Activated naive CD8-positive, alpha-beta T cell treated with anti-CD3 and anti-CD28 coated beads, Interleukin-2, amount 10 ng/mL, durations not matched to agents 7 days and 5 days (primary cell): ENCODE measurements at regions of chr3 and their contacts with region 1.

Region 1: GRCh38 chr3:170357176-170357919 is at the start of gene SKIL:
- DNase-seq: peak; percentile 93
- ATAC-seq: peak; percentile 80
- H3K4me3 Mint-ChIP-seq: peak within 1 kb of the TSS; percentile 93
- H3K27ac Mint-ChIP-seq: peak within 1 kb of the TSS; percentile 95
- H3K4me1 Mint-ChIP-seq: peaks cover 25% of the 10 kb centered on the region
- H3K27me3 Mint-ChIP-seq: peaks cover 8% of the 10 kb centered on the region
- total RNA-seq, gene SKIL: 27.9 to 32.6 TPM

Region 2: GRCh38 chr3:169804681-169805080 is 552.7 kb before region 1 on chr3:
- POLR2A ChIA-PET with region 1: no interaction called
- DNase-seq: no peak
- ATAC-seq: no peak
- H3K4me3 Mint-ChIP-seq: no peak overlapping the region
- H3K27ac Mint-ChIP-seq: no peak overlapping the region
- H3K4me1 Mint-ChIP-seq: peaks cover 10% of the 10 kb centered on the region
- H3K27me3 Mint-ChIP-seq: no peaks in the 10 kb centered on the region

Region 3: DNA sequence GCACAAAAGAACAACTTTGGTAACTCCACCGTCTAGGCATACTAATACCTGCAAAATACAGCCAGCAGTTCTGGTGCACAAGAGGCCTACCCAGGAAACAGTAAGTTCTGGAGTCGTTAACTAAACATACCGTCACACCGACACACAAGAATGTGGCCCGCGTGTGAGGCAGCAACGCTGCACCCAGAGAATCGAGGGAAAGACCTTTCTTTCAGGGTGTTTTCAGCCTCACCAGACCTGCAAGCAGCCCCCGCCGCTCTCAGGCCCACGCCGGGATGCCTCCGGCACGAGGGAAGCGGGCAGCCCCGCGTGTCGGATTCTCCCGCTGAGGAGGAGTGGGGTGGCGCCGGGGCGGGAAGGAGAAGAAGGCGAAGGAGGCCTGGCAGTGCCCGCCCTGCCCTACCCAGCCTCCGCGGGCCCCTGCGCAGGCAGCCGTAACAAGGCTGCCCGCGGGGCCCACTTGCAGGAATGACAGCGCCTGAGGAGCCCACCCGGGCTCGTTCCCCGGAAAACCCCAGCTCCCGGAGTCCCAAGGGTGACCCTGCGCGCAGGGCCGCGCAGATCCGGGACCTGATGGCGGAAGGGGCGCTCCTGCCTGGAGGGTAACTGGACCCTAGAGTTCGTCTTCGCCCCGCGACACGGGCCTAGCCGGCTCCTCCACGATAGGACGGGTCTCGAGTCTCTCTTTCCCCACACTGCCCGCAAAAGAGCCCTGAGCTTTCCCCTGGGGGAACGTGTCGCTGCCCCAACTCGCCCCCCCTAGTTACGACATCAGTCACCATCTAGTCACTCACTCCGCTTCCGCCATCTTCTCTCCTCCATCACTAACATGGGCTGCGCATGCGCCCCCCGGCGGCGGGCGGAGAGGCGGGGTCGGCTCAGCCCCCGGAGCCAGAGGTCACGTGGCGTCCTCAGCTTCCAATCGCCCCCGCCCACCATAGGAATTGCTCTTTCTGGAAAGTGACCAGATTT is 176.2 kb before region 1 on chr3 and contains the start of gene PHC3:
- POLR2A ChIA-PET with region 1: interaction called, 12 read pairs
- DNase-seq: peak; percentile 94
- ATAC-seq: peak; percentile 76
- H3K4me3 Mint-ChIP-seq: peak within 1 kb of the TSS; percentile 95
- H3K27ac Mint-ChIP-seq: peak within 1 kb of the TSS; percentile 99
- H3K4me1 Mint-ChIP-seq: peaks cover 22% of the 10 kb centered on the region
- H3K27me3 Mint-ChIP-seq: no peaks in the 10 kb centered on the region
- total RNA-seq, gene PHC3: 94.9 to 105 TPM

Region 4: DNA sequence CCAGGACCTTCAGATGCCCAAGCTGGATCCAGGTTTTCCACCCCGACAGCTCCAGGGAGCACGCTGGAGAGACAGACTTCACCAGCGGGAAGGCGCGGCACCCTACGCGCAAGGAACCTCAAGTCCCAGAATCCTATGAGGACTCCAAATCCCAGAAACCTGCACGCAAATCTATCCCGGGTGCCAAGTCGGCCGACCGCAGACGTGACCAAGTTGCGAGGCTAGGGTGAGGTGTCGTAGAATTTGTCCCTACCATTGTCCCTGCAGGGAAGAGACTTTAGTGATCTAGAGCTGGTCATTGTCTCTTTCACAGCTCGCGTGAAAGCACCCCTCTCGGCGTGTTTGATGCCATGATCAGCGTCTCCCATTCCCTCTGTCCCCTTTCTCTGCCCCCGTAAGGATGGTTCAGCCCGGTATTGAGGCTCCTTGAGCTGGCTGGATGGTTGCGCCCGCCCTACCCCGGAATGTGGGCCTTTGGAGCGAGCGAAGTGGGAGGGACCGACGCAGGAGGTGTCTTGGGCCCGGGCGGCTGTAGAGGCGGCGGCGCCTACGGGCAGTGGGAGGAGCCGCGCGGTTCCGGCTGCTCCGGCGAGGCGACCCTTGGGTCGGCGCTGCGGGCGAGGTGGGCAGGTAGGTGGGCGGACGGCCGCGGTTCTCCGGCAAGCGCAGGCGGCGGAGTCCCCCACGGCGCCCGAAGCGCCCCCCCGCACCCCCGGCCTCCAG is 135.3 kb before region 1 on chr3 and contains the start of gene PRKCI:
- POLR2A ChIA-PET with region 1: interaction called, 11 read pairs
- DNase-seq: peak; percentile 86
- ATAC-seq: peak; percentile 99
- H3K4me3 Mint-ChIP-seq: peak within 1 kb of the TSS; percentile 90
- H3K27ac Mint-ChIP-seq: peak within 1 kb of the TSS; percentile 85
- H3K4me1 Mint-ChIP-seq: peaks cover 20% of the 10 kb centered on the region
- H3K27me3 Mint-ChIP-seq: no peaks in the 10 kb centered on the region
- total RNA-seq, gene PRKCI: 23.7 to 24.2 TPM

Region 5: DNA sequence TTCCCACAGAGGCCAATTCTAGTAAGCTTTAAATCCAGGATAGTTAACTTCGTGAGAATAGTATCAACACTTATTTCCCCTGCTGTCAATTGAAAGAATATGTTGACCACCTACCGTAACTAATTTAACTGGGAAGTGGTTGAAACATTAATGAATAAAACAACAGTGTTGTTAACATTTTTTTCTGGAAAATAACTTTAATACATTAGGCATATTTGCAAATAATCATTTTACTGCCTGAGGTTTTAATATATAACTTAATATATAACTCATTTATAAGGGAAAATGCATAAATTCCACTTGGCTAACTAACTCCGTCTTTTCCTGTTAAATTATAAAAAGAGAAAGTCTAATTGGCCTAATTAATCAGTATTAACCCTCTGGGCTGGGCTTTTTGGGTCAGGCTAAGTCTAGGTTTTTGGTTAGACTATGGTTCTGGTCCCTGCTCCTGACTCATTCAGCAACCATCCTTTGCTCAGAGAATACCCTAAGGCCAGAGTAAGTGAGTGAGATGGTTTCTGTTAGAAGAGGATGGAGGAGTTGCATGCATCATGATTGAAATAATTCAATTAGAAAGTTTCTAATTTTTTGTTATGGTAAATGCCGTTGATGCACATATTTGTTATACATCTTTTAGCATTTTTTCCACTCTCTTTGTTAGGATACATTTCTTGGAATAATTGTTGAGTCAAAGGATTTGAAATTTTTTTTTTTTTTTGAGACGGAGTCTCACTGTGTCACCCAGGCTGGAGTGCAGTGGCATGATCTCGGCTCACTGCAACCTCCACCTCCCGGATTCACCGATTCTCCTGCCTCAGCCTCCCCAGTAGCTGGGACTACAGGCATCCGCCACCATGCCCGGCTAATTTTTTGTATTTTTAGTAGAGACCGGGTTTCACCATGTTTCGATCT is 10.6 kb before region 1 on chr3:
- POLR2A ChIA-PET with region 1: no interaction called
- DNase-seq: no peak
- ATAC-seq: no peak
- H3K4me3 Mint-ChIP-seq: no peak overlapping the region
- H3K27ac Mint-ChIP-seq: no peak overlapping the region
- H3K4me1 Mint-ChIP-seq: peaks cover 3% of the 10 kb centered on the region
- H3K27me3 Mint-ChIP-seq: no peaks in the 10 kb centered on the region